ENCODE measurements at regions of chr14 and their contacts with region 1.

Region 1: GRCh38 chr14:54058505-54058904 is 101.9 kb upstream of the BMP4 start:
- DNase-seq: no peak
- ATAC-seq: no peak
- H3K4me3 ChIP-seq: no peak overlapping the region
- H3K27ac ChIP-seq: no peak overlapping the region
- H3K4me1 ChIP-seq: no peaks in the 10 kb centered on the region
- H3K27me3 ChIP-seq: no peaks in the 10 kb centered on the region
- CTCF ChIP-seq: no peak

Region 2: GRCh38 chr14:53237488-53237887 is 821.0 kb before region 1 on chr14:
- CTCF ChIA-PET with region 1: no interaction called
- POLR2A ChIA-PET with region 1: interaction called, 13 read pairs
- intact Hi-C with region 1: no loop called
- DNase-seq: no peak
- ATAC-seq: no peak
- H3K4me3 ChIP-seq: no peak overlapping the region
- H3K27ac ChIP-seq: no peak overlapping the region
- H3K4me1 ChIP-seq: no peaks in the 10 kb centered on the region
- H3K27me3 ChIP-seq: no peaks in the 10 kb centered on the region
- CTCF ChIP-seq: no peak

Measured in PC-3 (cell line).